ENCODE measurements at regions of chr5 and their contacts with region 1.

Region 1: DNA sequence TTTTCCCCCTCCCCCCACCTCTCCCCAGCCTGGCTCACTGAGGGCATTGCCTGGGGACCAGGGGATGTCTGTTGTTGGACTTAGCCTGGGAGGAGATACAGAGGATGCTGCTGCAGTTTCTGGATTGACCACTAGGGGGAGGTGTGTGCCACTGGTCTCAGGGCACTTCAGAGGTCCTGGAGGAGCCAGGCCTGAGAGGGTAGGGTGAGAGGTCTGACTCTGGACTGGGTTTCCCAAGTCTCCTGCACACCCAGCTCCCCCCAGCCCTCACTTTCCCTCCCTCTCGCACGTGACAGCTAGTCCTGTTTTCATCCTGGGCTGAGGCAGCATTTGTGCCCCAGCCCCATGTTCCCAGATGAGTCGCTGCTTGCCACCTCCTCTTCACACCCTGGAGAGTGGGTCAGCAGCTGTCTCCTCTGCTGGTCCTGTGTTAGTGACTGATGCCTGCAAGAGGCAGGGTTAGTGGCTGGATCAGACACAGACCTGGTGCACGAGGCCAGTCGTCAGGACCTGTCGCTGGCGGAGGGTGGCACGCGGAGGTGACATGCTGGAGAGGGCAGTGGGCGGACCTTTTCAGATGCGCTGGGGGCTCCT is 4.4 kb downstream of the IL3 start:
- DNase-seq: peak; percentile 56 to 84 (median 71)
- H3K4me3 ChIP-seq: no peak overlapping the region
- H3K4me3 Mint-ChIP-seq: no peak overlapping the region
- H3K27ac ChIP-seq: no peak overlapping the region
- H3K27ac Mint-ChIP-seq: peak overlapping the region in 2 of 8 donors; percentile 44 to 81
- H3K4me1 ChIP-seq: peaks cover 7% of the 10 kb centered on the region
- H3K4me1 Mint-ChIP-seq: peaks cover 16 to 37% (median 24%) of the 10 kb centered on the region in 3 donors
- H3K27me3 ChIP-seq: no peaks in the 10 kb centered on the region
- H3K27me3 Mint-ChIP-seq: no peaks in the 10 kb centered on the region

Region 2: DNA sequence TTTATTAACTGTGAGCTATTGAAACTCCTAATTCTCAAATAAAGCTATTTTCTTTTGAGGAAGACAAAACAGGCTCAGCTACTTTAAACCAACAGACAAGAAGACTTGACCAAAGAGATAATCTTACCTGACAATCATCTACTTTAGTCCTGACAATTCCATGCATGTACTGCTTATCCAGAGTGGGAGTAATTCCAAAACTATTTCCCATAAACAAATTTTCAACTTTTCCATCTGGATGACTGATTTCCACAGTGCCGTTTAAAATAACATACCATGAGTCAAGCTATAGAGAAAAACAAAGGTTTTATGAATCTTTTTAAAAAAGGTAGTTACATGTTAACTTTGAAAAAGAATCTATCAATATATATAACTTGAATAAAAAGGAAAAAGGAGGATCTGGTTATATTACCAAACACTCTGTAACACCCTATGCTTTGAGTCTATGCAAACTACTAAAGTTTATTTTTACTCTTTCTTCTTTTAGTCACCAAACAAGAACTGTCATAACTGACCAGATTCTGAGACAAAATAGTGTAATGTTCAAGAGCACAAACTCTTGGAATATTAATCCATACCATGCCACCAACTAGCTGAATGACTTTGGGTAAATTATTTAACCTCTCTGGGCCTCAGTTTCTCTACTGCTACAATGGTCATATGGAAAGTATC is 559.5 kb before region 1 on chr5:
- CTCF ChIA-PET with region 1: no interaction called
- POLR2A ChIA-PET with region 1: no interaction called
- DNase-seq: no peak
- H3K4me3 ChIP-seq: no peak overlapping the region
- H3K4me3 Mint-ChIP-seq: no peak overlapping the region
- H3K27ac ChIP-seq: no peak overlapping the region
- H3K27ac Mint-ChIP-seq: peak overlapping the region in 2 of 8 donors; percentile 36 to 51
- H3K4me1 ChIP-seq: no peaks in the 10 kb centered on the region
- H3K4me1 Mint-ChIP-seq: peaks cover 19 to 44% (median 26%) of the 10 kb centered on the region in 3 donors
- H3K27me3 ChIP-seq: no peaks in the 10 kb centered on the region
- H3K27me3 Mint-ChIP-seq: no peaks in the 10 kb centered on the region

Region 3: GRCh38 chr5:131589510-131590348 is 475.1 kb before region 1 on chr5:
- CTCF ChIA-PET with region 1: interaction called, 46 read pairs
- POLR2A ChIA-PET with region 1: no interaction called
- DNase-seq: peak in 3 of 5 donors; percentile 47 to 65 (median 58)
- H3K4me3 ChIP-seq: no peak overlapping the region
- H3K4me3 Mint-ChIP-seq: no peak overlapping the region
- H3K27ac ChIP-seq: no peak overlapping the region
- H3K27ac Mint-ChIP-seq: peak overlapping the region in 6 of 8 donors; percentile 30 to 66 (median 52)
- H3K4me1 ChIP-seq: peaks cover 19% of the 10 kb centered on the region
- H3K4me1 Mint-ChIP-seq: peaks cover 39 to 53% (median 51%) of the 10 kb centered on the region in 3 donors
- H3K27me3 ChIP-seq: no peaks in the 10 kb centered on the region
- H3K27me3 Mint-ChIP-seq: peaks cover 0 to 1% of the 10 kb centered on the region in 2 donors

Region 4: DNA sequence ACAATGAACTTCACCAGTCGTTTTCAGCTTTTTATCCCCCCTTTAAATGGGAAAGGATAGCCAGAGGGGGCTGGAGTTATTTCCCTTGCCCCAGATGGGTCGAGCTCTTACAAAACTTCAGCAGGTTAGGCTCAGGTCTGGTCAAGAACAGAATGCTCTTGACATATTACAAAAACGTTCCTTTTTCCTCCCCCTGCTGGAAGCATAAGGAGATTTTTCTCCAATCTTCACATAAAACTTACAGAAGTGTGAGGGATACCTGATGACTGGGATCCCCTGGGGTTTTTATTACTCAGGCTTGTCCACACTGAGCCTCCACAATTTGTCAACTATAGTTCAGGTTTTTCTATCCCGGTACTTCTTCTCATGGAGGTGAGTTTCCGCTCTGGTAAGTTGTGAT is 69.5 kb after region 1 on chr5:
- CTCF ChIA-PET with region 1: interaction called, 20 read pairs
- POLR2A ChIA-PET with region 1: no interaction called
- DNase-seq: peak in 1 of 5 donors; percentile 6
- H3K4me3 ChIP-seq: no peak overlapping the region
- H3K4me3 Mint-ChIP-seq: no peak overlapping the region
- H3K27ac ChIP-seq: no peak overlapping the region
- H3K27ac Mint-ChIP-seq: no peak overlapping the region
- H3K4me1 ChIP-seq: no peaks in the 10 kb centered on the region
- H3K4me1 Mint-ChIP-seq: peaks cover 1 to 8% (median 4%) of the 10 kb centered on the region in 3 donors
- H3K27me3 ChIP-seq: no peaks in the 10 kb centered on the region
- H3K27me3 Mint-ChIP-seq: peaks cover 3 to 12% of the 10 kb centered on the region in 2 donors

Measured in CD8-positive, alpha-beta memory T cell (primary cell).